Heart left ventricle (tissue), 16 donors: ENCODE measurements at regions of chr6 and their contacts with region 1.

Region 1: DNA sequence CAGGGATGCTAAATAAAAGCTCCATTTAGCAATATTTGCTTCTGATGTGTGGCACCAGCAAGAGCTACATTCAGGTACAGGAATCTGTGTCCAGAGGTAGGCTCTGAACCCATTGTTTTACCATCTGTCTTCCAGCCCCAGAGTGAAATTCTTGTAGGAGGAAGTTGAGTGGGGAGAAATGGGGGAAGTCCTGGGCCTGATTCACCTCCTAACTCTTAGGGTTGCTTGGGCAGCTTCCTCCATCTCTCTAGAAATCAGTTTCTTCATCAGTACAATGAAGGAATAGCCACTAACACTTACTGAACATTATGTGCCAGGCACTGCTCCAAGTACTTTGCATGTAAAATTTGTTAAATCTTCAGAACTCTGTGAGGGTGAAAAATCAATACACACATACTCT is 35.1 kb upstream of the TSPYL1 start:
- DNase-seq: no peak
- ATAC-seq: peak in 2 of 4 donors; percentile 64 to 73
- H3K4me3 ChIP-seq: no peak overlapping the region
- H3K27ac ChIP-seq: no peak overlapping the region
- H3K4me1 ChIP-seq: peaks cover 0 to 30% (median 12%) of the 10 kb centered on the region in 12 donors
- H3K27me3 ChIP-seq: no peaks in the 10 kb centered on the region
- CTCF ChIP-seq: no peak
- POLR2A ChIP-seq: no peak

Region 2: DNA sequence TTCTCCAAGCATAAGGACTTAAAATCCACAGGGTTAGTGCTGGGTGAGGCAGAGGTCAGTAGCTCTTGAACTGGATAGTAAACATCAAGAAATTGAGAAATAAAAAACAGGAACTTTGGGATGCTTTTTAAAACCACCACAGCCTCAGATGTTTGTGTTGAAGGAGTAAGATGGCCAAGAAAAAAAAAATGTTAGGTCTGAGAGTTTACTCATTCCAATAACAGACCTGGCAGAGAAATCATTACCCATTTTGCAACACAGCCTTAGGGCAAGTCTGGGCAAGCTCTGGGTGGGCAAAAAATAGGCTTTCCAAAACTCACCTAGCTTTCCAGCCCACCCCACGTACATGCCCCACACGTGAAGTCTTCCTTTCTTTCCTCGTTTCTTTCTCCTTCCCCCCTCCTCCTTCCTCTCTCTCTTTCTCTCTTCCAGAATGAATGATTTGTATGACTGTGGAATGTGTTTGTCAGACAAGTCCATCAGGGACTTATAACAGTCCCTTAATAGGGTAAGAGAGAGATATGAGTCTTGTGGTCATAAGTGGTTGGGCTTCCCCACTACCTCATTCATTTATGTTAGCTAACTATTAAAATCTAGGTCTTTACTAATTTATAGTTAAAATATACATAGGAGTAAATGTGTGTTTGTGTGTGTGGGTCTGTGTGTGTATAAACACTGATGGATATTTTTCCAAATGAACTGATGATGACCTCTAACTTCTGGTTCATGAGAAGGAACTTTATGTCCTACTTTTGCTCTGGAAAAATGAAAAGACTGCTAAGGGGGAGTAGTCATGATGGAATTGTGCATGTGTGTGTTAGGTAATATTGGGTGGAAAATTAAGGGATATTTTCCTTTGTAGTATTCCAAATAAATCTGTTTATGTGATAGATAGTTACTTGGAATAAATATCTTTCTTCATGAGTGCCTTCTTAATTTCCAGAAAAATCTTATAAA is 37.9 kb after region 1 on chr6:
- intact Hi-C with region 1: loop called in 1 of 10 experiments (anchors 5 kb)
- DNase-seq: no peak
- ATAC-seq: peak; percentile 65 to 88 (median 78)
- H3K4me3 ChIP-seq: no peak overlapping the region
- H3K27ac ChIP-seq: peak overlapping the region in 11 of 12 donors; percentile 29 to 77 (median 43)
- H3K4me1 ChIP-seq: peaks cover 0 to 40% (median 10%) of the 10 kb centered on the region in 12 donors
- H3K27me3 ChIP-seq: no peaks in the 10 kb centered on the region
- CTCF ChIP-seq: no peak
- POLR2A ChIP-seq: no peak

Region 3: GRCh38 chr6:116476002-116476678 is 161.3 kb after region 1 on chr6:
- intact Hi-C with region 1: no loop called
- DNase-seq: no peak
- ATAC-seq: peak; percentile 34 to 57 (median 44)
- H3K4me3 ChIP-seq: peak overlapping the region in 1 of 12 donors; percentile 32
- H3K27ac ChIP-seq: peak overlapping the region in 1 of 12 donors; percentile 83
- H3K4me1 ChIP-seq: peaks cover 0 to 25% (median 0%) of the 10 kb centered on the region in 12 donors
- H3K27me3 ChIP-seq: peaks cover 0 to 4% (median 0%) of the 10 kb centered on the region in 9 donors
- CTCF ChIP-seq: no peak
- POLR2A ChIP-seq: no peak